Panc1 (cell line): ENCODE measurements at regions of chr5 and their contacts with region 1.

Region 1: DNA sequence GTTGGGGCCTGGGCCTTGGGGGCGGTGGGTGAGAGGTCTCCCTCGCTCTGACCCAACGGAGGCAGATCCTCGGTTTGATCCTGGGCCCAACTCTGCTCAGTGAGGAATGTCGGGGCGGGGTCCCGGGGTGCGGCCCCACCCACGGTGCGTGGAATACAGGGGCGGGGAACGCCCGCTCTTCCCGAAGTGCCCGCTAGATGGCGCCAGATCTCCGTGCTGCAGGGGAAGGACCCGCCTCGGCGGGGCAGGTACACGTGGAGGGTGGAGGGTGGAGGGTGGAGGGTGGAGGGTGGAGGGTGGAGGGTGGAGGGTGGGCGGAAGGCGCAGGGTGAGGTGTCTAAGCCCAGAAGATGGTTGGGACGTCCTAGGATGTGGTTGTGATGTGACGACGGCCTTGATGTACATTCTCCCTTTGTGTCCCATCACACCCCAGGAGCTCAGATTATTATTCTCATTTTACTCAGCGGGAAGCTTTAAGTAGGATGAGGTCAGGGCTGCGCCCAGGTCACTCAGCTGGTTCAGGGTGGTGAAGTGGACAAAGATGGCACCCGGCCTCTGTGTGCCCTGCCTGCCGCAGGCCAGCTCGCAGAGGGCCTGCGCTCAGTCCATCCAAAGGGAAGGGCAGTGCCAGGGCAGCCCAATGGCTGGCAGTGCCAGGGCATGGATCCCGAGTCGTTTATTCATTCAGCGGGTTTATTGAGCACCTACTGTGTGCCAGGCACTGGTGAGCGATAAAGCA is 9.4 kb upstream of the RPS14 start:
- DNase-seq: no peak
- ATAC-seq: peak; percentile 95
- H3K4me3 ChIP-seq: peak overlapping the region; percentile 15 to 41
- H3K27ac ChIP-seq: peak overlapping the region; percentile 84
- H3K4me1 ChIP-seq: peaks cover 22% of the 10 kb centered on the region
- H3K27me3 ChIP-seq: no peaks in the 10 kb centered on the region
- CTCF ChIP-seq: no peak; the same call in 1 of the 2 replicates

Region 2: GRCh38 chr5:150523472-150524350 is 64.7 kb after region 1 on chr5:
- CTCF ChIA-PET with region 1: interaction called, 6 read pairs
- POLR2A ChIA-PET with region 1: no interaction called
- in situ Hi-C with region 1: no loop called
- intact Hi-C with region 1: loop called (anchors 2 kb)
- DNase-seq: peak; percentile 41
- ATAC-seq: peak; percentile 80
- H3K4me3 ChIP-seq: no peak overlapping the region
- H3K27ac ChIP-seq: peak overlapping the region; percentile 69
- H3K4me1 ChIP-seq: peaks cover 52% of the 10 kb centered on the region
- H3K27me3 ChIP-seq: no peaks in the 10 kb centered on the region
- CTCF ChIP-seq: peak; percentile 83; the same call in 1 of the 2 replicates

Region 3: DNA sequence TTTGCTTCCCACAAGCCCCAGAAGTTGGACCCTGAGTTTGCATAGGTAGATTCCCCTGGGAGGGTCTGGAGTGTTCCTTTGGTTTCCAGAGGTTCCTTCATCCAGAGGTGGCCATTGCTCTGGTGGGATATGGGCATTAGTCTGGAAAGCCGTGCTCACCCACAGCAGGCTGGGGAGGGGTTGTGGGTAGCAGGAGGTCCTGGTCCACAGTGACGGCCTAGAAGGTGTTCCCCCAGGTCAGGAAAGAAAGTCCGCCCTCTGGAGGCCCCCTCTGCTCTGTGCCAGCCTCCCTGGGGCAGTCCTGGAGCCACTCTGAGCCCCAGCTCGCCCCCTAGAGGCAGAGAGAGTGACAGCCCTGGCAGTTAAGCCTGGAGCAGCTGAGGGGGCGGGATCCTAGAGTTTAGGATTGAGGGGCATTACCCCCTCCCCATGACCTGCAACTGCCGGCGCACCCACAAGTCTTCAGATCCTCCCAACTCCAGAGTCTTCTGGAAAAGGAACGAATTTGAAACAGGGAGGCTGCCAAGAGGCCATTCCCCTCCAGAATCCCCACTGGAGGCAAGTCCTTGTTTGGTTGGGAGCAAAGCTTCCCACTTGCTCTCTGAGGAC is 85.7 kb after region 1 on chr5:
- CTCF ChIA-PET with region 1: interaction called, 6 read pairs
- POLR2A ChIA-PET with region 1: no interaction called
- in situ Hi-C with region 1: no loop called
- intact Hi-C with region 1: loop called (anchors 5 kb)
- DNase-seq: peak; percentile 51
- ATAC-seq: peak; percentile 89
- H3K4me3 ChIP-seq: no peak overlapping the region
- H3K27ac ChIP-seq: peak overlapping the region; percentile 39; the same call in 1 of the 2 replicates
- H3K4me1 ChIP-seq: no peaks in the 10 kb centered on the region; the same call in 1 of the 2 replicates
- H3K27me3 ChIP-seq: no peaks in the 10 kb centered on the region
- CTCF ChIP-seq: peak; percentile 98

Region 4: GRCh38 chr5:150571836-150572235 is 112.8 kb after region 1 on chr5:
- CTCF ChIA-PET with region 1: no interaction called
- POLR2A ChIA-PET with region 1: interaction called, 16 read pairs
- in situ Hi-C with region 1: no loop called
- intact Hi-C with region 1: no loop called
- DNase-seq: no peak
- ATAC-seq: no peak
- H3K4me3 ChIP-seq: no peak overlapping the region
- H3K27ac ChIP-seq: no peak overlapping the region
- H3K4me1 ChIP-seq: no peaks in the 10 kb centered on the region; the same call in 1 of the 2 replicates
- H3K27me3 ChIP-seq: no peaks in the 10 kb centered on the region
- CTCF ChIP-seq: no peak

Region 5: DNA sequence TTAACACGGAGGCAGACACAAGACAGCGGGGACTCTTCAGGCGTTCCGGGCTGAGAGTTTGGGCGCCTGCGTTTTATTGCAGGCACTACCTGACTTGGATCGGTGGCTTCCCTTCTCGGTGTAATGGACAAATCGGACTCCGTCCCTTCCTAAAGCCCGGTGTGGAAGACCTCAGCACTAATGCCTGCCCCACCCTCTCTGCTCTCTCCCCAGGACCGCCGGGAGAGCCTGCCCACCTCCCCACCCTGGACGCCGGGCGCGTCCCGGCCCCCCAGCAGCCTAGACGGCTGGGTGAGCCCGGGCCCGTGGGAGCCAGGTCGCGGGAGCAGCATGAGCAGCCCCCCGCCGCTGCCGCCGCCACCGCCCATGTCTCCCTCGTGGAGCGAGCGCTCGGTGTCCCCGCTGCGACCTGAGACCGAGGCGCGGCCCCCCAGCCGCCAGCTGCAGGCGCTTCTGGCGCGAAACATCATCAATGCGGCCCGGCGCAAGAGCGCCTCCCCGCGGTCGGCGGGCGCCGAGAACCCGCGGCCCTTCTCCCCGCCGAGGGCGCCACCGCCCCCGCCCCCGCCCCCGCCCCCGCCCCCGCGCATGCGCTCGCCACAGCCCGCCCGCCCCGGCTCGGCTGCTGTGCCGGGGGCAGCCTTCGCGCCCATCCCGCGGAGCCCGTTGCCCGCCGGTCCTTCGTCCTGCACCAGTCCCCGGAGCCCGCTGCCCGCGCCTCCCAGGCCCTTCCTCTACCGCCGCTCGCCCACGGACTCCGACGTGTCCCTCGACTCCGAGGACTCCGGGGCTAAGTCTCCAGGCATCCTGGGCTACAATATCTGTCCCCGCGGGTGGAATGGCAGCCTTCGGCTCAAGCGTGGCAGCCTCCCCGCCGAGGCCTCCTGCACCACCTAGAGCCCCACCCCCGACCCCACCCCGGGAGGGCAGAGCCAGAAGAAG is 197.5 kb after region 1 on chr5:
- CTCF ChIA-PET with region 1: interaction called, 12 read pairs
- POLR2A ChIA-PET with region 1: no interaction called
- in situ Hi-C with region 1: no loop called
- intact Hi-C with region 1: loop called (anchors 1 kb)
- DNase-seq: no peak
- ATAC-seq: peak; percentile 80
- H3K4me3 ChIP-seq: peak overlapping the region; percentile 49 to 60
- H3K27ac ChIP-seq: peak overlapping the region; percentile 86
- H3K4me1 ChIP-seq: peaks cover 21% of the 10 kb centered on the region
- H3K27me3 ChIP-seq: no peaks in the 10 kb centered on the region
- CTCF ChIP-seq: peak; percentile 93